PC-3 (cell line): ENCODE measurements at regions of chr10 and their contacts with region 1.

Region 1: GRCh38 chr10:62816331-62817120 is at the start of gene EGR2:
- DNase-seq: peak; percentile 100
- ATAC-seq: peak; percentile 76
- H3K4me3 ChIP-seq: peak within 1 kb of the TSS; percentile 69
- H3K27ac ChIP-seq: peak within 1 kb of the TSS; percentile 37
- H3K4me1 ChIP-seq: peaks cover 22% of the 10 kb centered on the region
- H3K27me3 ChIP-seq: no peaks in the 10 kb centered on the region
- CTCF ChIP-seq: no peak; the same call in 1 of the 2 replicates
- total RNA-seq, gene EGR2: 2.7 and 2.8 TPM in 2 replicates

Region 2: GRCh38 chr10:62594093-62594520 is 222.4 kb before region 1 on chr10:
- CTCF ChIA-PET with region 1: interaction called, 17 read pairs
- POLR2A ChIA-PET with region 1: no interaction called
- intact Hi-C with region 1: loop called (anchors 1 kb)
- DNase-seq: peak; percentile 98
- ATAC-seq: peak; percentile 86
- H3K4me3 ChIP-seq: no peak overlapping the region
- H3K27ac ChIP-seq: no peak overlapping the region
- H3K4me1 ChIP-seq: peaks cover 11% of the 10 kb centered on the region
- H3K27me3 ChIP-seq: no peaks in the 10 kb centered on the region
- CTCF ChIP-seq: peak; percentile 100

Region 3: GRCh38 chr10:62732841-62733653 is 83.5 kb before region 1 on chr10:
- CTCF ChIA-PET with region 1: interaction called, 16 read pairs
- POLR2A ChIA-PET with region 1: interaction called, 4 read pairs
- intact Hi-C with region 1: loop called (anchors 1 kb)
- DNase-seq: peak; percentile 100
- ATAC-seq: peak; percentile 86
- H3K4me3 ChIP-seq: peak overlapping the region; percentile 18
- H3K27ac ChIP-seq: peak overlapping the region; percentile 84
- H3K4me1 ChIP-seq: peaks cover 60% of the 10 kb centered on the region
- H3K27me3 ChIP-seq: no peaks in the 10 kb centered on the region
- CTCF ChIP-seq: no peak

Region 4: DNA sequence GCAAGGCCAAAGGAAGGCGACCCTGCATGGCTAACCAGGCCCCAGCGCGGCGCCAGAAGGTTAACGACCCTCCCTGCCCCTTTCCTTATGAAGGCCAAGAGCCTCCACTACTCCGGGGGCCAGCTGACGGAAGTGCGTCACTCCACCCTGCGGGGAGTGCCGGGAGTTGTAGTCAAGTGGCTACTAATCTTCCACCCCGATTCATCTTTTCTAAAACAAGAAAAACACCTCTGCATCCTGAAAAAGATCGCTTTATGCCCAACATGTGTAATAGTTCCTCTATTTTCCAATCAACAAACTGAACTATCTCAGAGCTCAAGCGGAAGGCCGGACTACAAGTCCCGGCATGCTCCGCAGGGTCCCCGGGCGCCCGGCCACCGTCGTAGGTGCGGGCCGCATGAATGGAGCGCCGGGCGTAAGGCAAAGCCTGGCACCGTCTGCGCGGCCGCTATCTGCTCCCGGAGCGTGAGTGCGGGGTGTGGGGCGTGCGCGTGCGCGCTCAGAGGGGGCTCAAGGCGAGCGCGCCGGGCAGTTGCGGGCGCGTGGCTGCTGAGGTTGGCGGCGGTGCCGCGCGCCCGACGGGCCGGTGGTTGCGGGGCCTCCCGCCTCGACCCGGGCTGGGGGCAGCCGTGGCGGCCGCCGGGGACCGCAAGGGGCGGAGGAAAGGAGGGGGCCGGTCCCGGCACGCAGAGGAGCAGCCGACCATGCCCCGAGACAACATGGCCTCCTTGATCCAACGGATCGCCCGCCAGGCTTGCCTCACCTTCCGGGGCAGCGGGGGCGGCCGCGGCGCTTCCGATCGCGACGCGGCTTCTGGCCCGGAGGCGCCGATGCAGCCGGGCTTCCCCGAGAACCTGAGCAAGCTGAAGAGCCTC is 11.9 kb before region 1 on chr10 and contains the start of gene ADO:
- CTCF ChIA-PET with region 1: interaction called, 17 read pairs
- POLR2A ChIA-PET with region 1: interaction called, 10 read pairs
- intact Hi-C with region 1: loop called (anchors 1 kb)
- DNase-seq: peak; percentile 97
- ATAC-seq: peak; percentile 82
- H3K4me3 ChIP-seq: peak within 1 kb of the TSS; percentile 79
- H3K27ac ChIP-seq: peak within 1 kb of the TSS; percentile 60
- H3K4me1 ChIP-seq: peaks cover 37% of the 10 kb centered on the region
- H3K27me3 ChIP-seq: no peaks in the 10 kb centered on the region
- CTCF ChIP-seq: no peak
- total RNA-seq, gene ADO: 107 and 129 TPM in 2 replicates

Region 5: GRCh38 chr10:63058236-63058635 is 241.7 kb after region 1 on chr10:
- CTCF ChIA-PET with region 1: interaction called, 16 read pairs
- POLR2A ChIA-PET with region 1: no interaction called
- intact Hi-C with region 1: no loop called
- DNase-seq: no peak
- ATAC-seq: no peak
- H3K4me3 ChIP-seq: no peak overlapping the region
- H3K27ac ChIP-seq: no peak overlapping the region
- H3K4me1 ChIP-seq: peaks cover 15% of the 10 kb centered on the region
- H3K27me3 ChIP-seq: no peaks in the 10 kb centered on the region
- CTCF ChIP-seq: no peak

Region 6: GRCh38 chr10:63140077-63140476 is 323.6 kb after region 1 on chr10:
- CTCF ChIA-PET with region 1: no interaction called
- POLR2A ChIA-PET with region 1: no interaction called
- intact Hi-C with region 1: no loop called
- DNase-seq: peak; percentile 76
- ATAC-seq: peak; percentile 57
- H3K4me3 ChIP-seq: no peak overlapping the region
- H3K27ac ChIP-seq: no peak overlapping the region
- H3K4me1 ChIP-seq: peaks cover 24% of the 10 kb centered on the region
- H3K27me3 ChIP-seq: no peaks in the 10 kb centered on the region
- CTCF ChIP-seq: no peak

Region 7: GRCh38 chr10:63157845-63158624 is 341.5 kb after region 1 on chr10:
- CTCF ChIA-PET with region 1: interaction called, 28 read pairs
- POLR2A ChIA-PET with region 1: no interaction called
- intact Hi-C with region 1: loop called (anchors 1 kb)
- DNase-seq: peak; percentile 99
- ATAC-seq: peak; percentile 80
- H3K4me3 ChIP-seq: no peak overlapping the region
- H3K27ac ChIP-seq: peak overlapping the region; percentile 17
- H3K4me1 ChIP-seq: peaks cover 7% of the 10 kb centered on the region; the same call in 1 of the 2 replicates
- H3K27me3 ChIP-seq: no peaks in the 10 kb centered on the region
- CTCF ChIP-seq: peak; percentile 100

Region 8: DNA sequence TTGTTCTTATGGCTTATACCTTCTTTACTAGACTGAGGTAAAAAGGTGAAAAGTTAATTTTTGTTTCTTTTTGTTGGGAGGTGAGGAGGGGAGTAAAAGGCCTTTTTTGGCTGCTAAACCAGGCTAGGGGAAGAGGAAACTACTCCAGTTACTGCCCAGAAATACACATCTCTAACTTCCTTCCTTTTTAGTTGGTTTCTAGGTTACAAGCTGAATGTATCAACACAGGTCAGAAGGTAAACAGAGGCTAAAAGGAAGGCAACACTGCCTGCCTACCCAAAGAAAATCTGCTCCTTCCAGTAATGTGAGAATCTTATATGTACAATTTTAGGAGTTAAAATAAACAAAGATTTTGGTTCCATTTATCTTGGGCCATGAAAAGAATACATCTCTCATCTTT is 457.1 kb after region 1 on chr10:
- CTCF ChIA-PET with region 1: no interaction called
- POLR2A ChIA-PET with region 1: no interaction called
- intact Hi-C with region 1: no loop called
- DNase-seq: peak; percentile 64
- ATAC-seq: peak; percentile 4; the same call in 1 of the 2 replicates
- H3K4me3 ChIP-seq: no peak overlapping the region
- H3K27ac ChIP-seq: no peak overlapping the region
- H3K4me1 ChIP-seq: peaks cover 26% of the 10 kb centered on the region
- H3K27me3 ChIP-seq: no peaks in the 10 kb centered on the region
- CTCF ChIP-seq: no peak